ENCODE measurements at regions of chr7 and their contacts with region 1.

Region 1: GRCh38 chr7:98400542-98401340 is at the start of gene BAIAP2L1:
- DNase-seq: peak; percentile 95 to 97
- H3K4me3 ChIP-seq: peak within 1 kb of the TSS; percentile 41 to 77 (median 48)
- H3K27ac ChIP-seq: peak within 1 kb of the TSS; percentile 78 to 87 (median 82)
- H3K4me1 ChIP-seq: peaks cover 3 to 9% of the 10 kb centered on the region in 2 donors
- H3K27me3 ChIP-seq: no peaks in the 10 kb centered on the region
- CTCF ChIP-seq: peak in 1 of 6 experiments; percentile 86
- POLR2A ChIP-seq: peak; percentile 49 to 91
- total RNA-seq, gene BAIAP2L1: 15.3 to 28.2 (median 19.8) TPM

Region 2: GRCh38 chr7:98276195-98276761 is 124.5 kb before region 1 on chr7:
- intact Hi-C with region 1: no loop called
- DNase-seq: no peak
- H3K4me3 ChIP-seq: no peak overlapping the region
- H3K27ac ChIP-seq: no peak overlapping the region
- H3K4me1 ChIP-seq: peaks cover 0 to 3% of the 10 kb centered on the region in 2 donors
- H3K27me3 ChIP-seq: no peaks in the 10 kb centered on the region
- CTCF ChIP-seq: no peak
- POLR2A ChIP-seq: no peak

Region 3: DNA sequence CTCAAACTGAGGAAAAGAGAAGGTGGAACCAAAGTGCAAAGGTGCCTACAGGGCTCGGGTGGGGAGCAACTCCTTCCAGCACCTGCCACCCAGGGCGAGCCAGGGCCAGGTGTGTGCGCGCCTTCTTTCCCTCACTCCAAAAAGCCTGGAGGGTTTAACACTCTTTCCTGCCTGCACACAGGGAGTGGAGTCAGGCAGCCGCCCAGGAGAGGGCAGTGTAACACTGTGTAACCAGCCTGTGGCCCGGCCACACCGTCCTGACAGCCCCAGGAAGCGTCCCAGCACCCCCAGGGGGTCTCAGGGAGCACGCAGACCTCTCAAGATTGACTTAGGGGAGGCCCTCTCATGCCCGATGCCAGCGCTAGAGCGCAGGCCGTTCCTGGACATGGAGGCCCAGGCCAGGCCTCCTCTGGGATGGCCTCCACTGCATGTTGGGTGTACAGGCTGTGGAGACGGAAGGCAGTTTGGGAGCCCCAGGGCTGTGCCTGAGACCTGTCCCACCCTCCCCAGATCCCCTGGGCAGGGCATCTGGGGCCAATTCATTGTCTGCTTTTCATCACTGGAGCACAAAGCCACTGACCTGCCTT is 105.9 kb before region 1 on chr7:
- intact Hi-C with region 1: loop called (anchors 5 kb)
- DNase-seq: peak; percentile 83 to 84
- H3K4me3 ChIP-seq: no peak overlapping the region
- H3K27ac ChIP-seq: peak overlapping the region; percentile 72 to 87 (median 74)
- H3K4me1 ChIP-seq: peaks cover 28 to 41% of the 10 kb centered on the region in 2 donors
- H3K27me3 ChIP-seq: no peaks in the 10 kb centered on the region
- CTCF ChIP-seq: peak; percentile 34 to 88 (median 73)
- POLR2A ChIP-seq: peak in 1 of 2 donors; percentile 2

Measured in thyroid gland (tissue), 4 donors.